Cardiac septum (tissue), 1 donor: ENCODE measurements at regions of chr3 and their contacts with region 1.

Region 1: DNA sequence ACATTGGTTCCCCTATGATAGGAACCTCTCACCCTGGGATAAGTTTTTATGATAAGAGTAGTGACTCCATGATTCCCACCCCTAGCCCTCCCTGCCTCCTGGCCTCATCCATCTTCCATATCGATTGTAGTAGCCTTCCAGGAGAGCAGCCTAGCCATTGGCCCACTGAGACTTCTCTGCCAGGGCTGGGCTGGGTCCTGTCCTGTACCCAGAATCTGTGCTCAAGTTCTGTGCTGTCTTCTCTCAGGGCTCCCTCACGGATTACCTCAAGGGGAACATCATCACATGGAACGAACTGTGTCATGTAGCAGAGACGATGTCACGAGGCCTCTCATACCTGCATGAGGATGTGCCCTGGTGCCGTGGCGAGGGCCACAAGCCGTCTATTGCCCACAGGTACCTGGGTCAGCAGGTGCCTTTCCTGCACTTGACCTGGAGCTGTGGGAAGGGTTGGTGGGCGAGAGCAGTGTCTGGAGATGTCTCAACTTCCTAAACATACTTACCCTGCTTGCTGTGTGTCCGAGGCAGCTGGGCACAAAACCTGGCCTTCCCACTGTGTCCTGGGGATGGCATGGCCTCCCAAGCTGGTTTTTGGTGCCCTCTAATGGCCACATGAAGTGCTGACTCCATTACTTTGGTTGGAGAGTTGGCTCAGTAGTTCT is 16.6 kb upstream of the EXOG start:
- DNase-seq: no peak

Region 2: DNA sequence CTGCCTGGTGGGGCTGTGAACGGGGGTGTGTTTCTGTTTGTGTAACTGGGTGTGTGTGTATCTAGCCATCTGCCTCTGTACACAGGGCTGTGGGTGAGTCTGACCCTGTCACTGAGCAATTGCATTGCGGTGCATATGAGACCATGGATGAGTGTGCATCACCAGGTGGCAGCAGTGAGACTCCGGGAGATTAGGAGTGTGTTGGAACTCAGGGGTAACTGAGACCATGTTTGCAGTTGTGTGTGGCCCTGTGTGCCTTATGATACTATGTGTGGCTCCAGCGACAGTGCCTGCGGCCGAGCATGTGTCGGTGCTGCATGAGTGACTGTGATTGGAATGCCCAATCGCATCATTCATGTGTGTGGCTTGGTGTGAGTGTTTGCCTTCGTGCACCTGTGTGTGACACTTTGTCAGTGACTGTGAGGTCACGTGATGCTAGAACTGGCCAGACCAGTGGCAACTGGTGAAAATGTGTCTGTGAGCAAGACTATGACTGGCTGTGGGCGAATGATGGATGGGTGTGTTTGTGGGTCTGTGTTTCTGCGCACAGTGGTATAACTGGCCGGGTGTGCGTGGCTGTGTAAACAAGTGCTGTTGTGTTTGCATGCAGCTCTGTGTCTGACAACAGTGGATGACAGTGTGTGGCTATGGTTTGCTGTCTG is 475.0 kb before region 1 on chr3:
- intact Hi-C with region 1: loop called (anchors 10 kb)
- DNase-seq: no peak

Region 3: DNA sequence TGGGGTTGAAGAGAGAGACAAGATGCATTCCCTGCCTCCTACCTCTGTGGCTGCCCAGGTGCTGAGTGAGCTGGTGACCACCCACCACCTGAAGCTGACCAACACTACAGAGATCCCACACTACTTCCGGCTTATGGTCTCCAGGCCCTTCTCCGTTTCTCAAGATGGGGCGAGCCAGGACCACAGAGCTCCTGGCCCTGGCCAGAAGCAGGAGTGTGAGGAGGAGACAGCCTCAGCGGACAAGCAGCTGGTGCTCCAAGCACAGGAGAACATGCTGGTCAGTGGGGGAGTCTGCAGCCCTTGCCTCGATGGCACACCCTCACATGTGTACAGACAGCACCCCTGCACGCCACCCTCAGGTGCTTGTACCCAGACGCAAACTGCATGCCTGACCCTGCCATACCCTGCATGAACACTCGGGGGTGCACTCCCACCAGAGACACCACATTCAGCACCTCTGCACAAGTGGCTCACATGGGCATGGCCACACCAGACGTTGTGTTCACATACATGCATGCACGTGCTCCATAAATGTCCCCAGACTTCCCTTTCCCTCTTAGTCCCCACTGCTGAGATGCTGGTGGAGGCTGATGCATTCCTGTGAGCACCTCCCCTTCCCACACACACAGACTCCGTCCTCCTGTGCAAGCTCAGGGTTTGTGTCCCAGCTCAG is 361.7 kb before region 1 on chr3:
- intact Hi-C with region 1: loop called (anchors 2 kb)
- DNase-seq: peak; percentile 75

Region 4: DNA sequence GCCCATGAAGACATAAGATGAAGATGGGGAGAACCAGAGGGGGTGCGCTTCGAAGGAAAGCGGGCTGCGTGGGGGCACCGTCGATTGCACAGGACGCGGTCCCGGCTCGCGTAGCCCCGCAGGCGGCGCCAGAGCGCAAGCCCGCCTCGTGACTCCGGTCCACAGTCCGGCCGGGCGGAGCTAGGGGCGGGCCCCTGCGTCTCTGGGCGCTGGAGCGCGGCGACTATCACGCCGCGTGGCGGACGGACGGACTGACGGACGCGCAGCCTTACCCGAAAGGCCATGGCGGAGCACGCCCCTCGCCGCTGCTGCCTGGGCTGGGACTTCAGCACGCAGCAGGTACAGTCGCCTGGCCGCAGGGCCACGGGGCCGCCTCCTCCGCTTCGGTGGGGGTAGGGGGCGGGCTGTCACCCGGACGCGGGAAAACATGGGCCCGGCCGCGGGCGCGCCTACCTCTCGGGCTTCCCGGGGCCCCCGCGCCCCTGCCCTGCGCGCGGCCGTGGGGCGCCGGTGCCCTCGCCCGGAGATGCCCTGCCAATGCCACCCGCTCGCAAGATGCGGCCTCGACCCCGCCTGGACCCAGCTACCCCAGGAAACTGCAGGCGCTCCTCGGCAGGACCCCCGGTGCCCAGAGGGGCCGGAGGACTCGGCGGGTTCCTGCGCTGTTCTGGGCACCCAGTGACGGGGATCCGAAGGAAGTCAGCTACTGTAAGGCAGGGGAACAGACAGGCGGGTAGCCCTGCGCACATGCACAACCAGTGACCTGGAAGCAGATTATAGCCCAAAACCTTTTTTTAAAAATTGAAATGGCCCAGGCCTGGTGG is 132.8 kb before region 1 on chr3 and contains the start of gene XYLB:
- intact Hi-C with region 1: loop called (anchors 2 kb)
- DNase-seq: peak; percentile 94
- total RNA-seq, gene XYLB: 0.46 TPM

Region 5: GRCh38 chr3:38717355-38718240 is 238.0 kb after region 1 on chr3:
- intact Hi-C with region 1: no loop called
- DNase-seq: no peak